Endothelial cell of umbilical vein (primary cell): ENCODE measurements at regions of chr11 and their contacts with region 1.

Region 1: GRCh38 chr11:59822989-59823566 is 12.5 kb upstream of the MRPL16 start:
- DNase-seq: peak; percentile 87
- H3K4me3 ChIP-seq: no peak overlapping the region
- H3K27ac ChIP-seq: no peak overlapping the region
- H3K4me1 ChIP-seq: no peaks in the 10 kb centered on the region
- H3K27me3 ChIP-seq: no peaks in the 10 kb centered on the region
- CTCF ChIP-seq: peak; percentile 48 to 67
- POLR2A ChIP-seq: no peak

Region 2: GRCh38 chr11:59901306-59901705 is 78.2 kb after region 1 on chr11:
- CTCF ChIA-PET with region 1: interaction called, 4 read pairs
- POLR2A ChIA-PET with region 1: no interaction called
- dilution Hi-C with region 1: no loop called
- intact Hi-C with region 1: loop called (anchors 5 kb)
- DNase-seq: peak; percentile 98
- H3K4me3 ChIP-seq: peak overlapping the region in 1 of 3 experiments; percentile 38
- H3K27ac ChIP-seq: peak overlapping the region; percentile 95
- H3K4me1 ChIP-seq: peaks cover 15% of the 10 kb centered on the region
- H3K27me3 ChIP-seq: no peaks in the 10 kb centered on the region
- CTCF ChIP-seq: no peak
- POLR2A ChIP-seq: no peak

Region 3: GRCh38 chr11:60016881-60017280 is 193.8 kb after region 1 on chr11 and contains the start of gene OOSP4B:
- CTCF ChIA-PET with region 1: no interaction called
- POLR2A ChIA-PET with region 1: no interaction called
- dilution Hi-C with region 1: no loop called
- intact Hi-C with region 1: no loop called
- DNase-seq: no peak
- H3K4me3 ChIP-seq: no peak within 1 kb of the TSS
- H3K27ac ChIP-seq: no peak within 1 kb of the TSS
- H3K4me1 ChIP-seq: no peaks in the 10 kb centered on the region
- H3K27me3 ChIP-seq: peaks cover 0 to 3% of the 10 kb centered on the region in 2 experiments
- CTCF ChIP-seq: no peak
- POLR2A ChIP-seq: no peak
- total RNA-seq, gene OOSP4B: not detected in 2 replicates

Region 4: DNA sequence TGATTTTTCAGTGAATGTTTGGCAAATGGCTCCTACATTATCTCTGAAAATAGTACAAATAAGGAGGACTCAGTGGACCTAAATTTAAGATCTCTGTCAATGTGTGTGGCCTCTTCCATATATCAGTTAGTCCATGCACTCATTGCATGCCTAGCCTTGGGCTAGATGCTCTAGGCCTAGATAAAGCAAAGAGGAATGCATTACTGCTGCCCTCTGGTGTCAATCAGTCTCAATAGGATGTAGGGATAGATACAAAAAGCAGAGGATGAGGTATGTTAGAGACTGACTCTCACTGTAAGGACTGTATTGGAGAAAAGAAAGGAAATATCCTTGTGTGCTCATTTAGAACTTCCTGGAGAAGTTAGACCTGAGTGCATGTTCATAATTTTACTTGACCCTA is 307.4 kb after region 1 on chr11:
- CTCF ChIA-PET with region 1: interaction called, 3 read pairs
- POLR2A ChIA-PET with region 1: no interaction called
- dilution Hi-C with region 1: no loop called
- intact Hi-C with region 1: loop called (anchors 1 kb)
- DNase-seq: peak; percentile 86
- H3K4me3 ChIP-seq: no peak overlapping the region
- H3K27ac ChIP-seq: no peak overlapping the region
- H3K4me1 ChIP-seq: peaks cover 12% of the 10 kb centered on the region
- H3K27me3 ChIP-seq: no peaks in the 10 kb centered on the region
- CTCF ChIP-seq: peak; percentile 24 to 44
- POLR2A ChIP-seq: no peak

Region 5: GRCh38 chr11:60193687-60194433 is 370.8 kb after region 1 on chr11:
- CTCF ChIA-PET with region 1: interaction called, 4 read pairs
- POLR2A ChIA-PET with region 1: no interaction called
- dilution Hi-C with region 1: no loop called
- intact Hi-C with region 1: loop called (anchors 1 kb)
- DNase-seq: peak; percentile 98
- H3K4me3 ChIP-seq: no peak overlapping the region
- H3K27ac ChIP-seq: peak overlapping the region; percentile 92
- H3K4me1 ChIP-seq: peaks cover 37% of the 10 kb centered on the region
- H3K27me3 ChIP-seq: no peaks in the 10 kb centered on the region
- CTCF ChIP-seq: peak; percentile 97
- POLR2A ChIP-seq: peak; percentile 21

Region 6: DNA sequence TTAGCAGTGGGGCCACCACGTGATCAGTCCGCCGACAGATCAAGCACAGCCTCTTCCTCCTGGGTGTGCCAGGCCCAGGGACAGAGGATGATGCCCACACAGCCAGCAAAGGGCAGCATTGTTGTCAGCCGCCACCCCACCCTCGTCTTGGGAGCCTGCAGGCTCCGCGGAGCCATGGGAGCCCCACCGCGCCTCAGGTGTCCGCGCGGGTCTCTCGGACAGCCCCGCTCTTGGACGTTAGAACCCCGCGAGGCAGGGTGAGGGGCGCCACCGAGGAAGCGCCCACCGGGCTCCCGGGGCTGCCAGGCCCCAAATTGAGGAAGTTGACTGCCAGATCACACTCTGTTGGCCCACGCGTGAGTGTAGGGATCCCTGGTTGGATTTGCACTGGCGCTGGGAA is 792.4 kb after region 1 on chr11:
- CTCF ChIA-PET with region 1: no interaction called
- POLR2A ChIA-PET with region 1: no interaction called
- dilution Hi-C with region 1: no loop called
- intact Hi-C with region 1: loop called (anchors 1 kb)
- DNase-seq: no peak
- H3K4me3 ChIP-seq: no peak overlapping the region
- H3K27ac ChIP-seq: no peak overlapping the region
- H3K4me1 ChIP-seq: no peaks in the 10 kb centered on the region
- H3K27me3 ChIP-seq: peaks cover 2% of the 10 kb centered on the region in 2 experiments
- CTCF ChIP-seq: no peak
- POLR2A ChIP-seq: no peak